PC-3 (cell line): ENCODE measurements at regions of chr6 and their contacts with region 1.

Region 1: DNA sequence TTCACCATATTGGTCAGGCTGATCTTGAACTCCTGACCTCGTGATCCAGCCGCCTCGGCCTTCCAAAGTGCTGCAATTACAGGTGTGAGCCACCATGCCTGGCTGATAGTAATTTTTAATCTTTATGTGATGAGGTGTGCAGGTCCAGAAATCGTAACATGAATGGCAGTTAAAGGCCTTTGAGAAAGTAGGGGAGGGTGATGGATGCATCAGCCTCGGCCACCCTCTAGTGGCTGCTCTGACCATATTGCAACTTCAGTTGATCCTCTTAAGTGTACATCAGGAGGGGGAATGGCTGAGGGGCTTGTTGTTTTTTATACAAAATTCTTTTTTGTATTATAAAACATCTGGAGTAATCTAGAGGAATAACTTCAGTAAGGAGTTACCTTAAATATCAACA is 193.0 kb downstream of the ZFAND3 start:
- DNase-seq: peak; percentile 67
- ATAC-seq: peak; percentile 90
- H3K4me3 ChIP-seq: no peak overlapping the region
- H3K27ac ChIP-seq: no peak overlapping the region
- H3K4me1 ChIP-seq: no peaks in the 10 kb centered on the region
- H3K27me3 ChIP-seq: no peaks in the 10 kb centered on the region
- CTCF ChIP-seq: peak; percentile 91

Region 2: GRCh38 chr6:37698261-37699137 is 314.1 kb before region 1 on chr6:
- CTCF ChIA-PET with region 1: no interaction called
- POLR2A ChIA-PET with region 1: no interaction called
- intact Hi-C with region 1: loop called (anchors 5 kb)
- DNase-seq: peak; percentile 58
- ATAC-seq: peak; percentile 36
- H3K4me3 ChIP-seq: peak overlapping the region; percentile 85
- H3K27ac ChIP-seq: no peak overlapping the region
- H3K4me1 ChIP-seq: peaks cover 3% of the 10 kb centered on the region; the same call in 1 of the 2 replicates
- H3K27me3 ChIP-seq: peaks cover 17% of the 10 kb centered on the region
- CTCF ChIP-seq: 0 out of 2 replicates have a peak, but pooled peaks have one; percentile 20

Region 3: GRCh38 chr6:37791156-37791919 is 221.2 kb before region 1 on chr6:
- CTCF ChIA-PET with region 1: interaction called, 3 read pairs
- POLR2A ChIA-PET with region 1: no interaction called
- intact Hi-C with region 1: loop called (anchors 1 kb)
- DNase-seq: peak; percentile 98
- ATAC-seq: peak; percentile 97
- H3K4me3 ChIP-seq: no peak overlapping the region
- H3K27ac ChIP-seq: no peak overlapping the region
- H3K4me1 ChIP-seq: peaks cover 23% of the 10 kb centered on the region
- H3K27me3 ChIP-seq: no peaks in the 10 kb centered on the region
- CTCF ChIP-seq: peak; percentile 94

Region 4: DNA sequence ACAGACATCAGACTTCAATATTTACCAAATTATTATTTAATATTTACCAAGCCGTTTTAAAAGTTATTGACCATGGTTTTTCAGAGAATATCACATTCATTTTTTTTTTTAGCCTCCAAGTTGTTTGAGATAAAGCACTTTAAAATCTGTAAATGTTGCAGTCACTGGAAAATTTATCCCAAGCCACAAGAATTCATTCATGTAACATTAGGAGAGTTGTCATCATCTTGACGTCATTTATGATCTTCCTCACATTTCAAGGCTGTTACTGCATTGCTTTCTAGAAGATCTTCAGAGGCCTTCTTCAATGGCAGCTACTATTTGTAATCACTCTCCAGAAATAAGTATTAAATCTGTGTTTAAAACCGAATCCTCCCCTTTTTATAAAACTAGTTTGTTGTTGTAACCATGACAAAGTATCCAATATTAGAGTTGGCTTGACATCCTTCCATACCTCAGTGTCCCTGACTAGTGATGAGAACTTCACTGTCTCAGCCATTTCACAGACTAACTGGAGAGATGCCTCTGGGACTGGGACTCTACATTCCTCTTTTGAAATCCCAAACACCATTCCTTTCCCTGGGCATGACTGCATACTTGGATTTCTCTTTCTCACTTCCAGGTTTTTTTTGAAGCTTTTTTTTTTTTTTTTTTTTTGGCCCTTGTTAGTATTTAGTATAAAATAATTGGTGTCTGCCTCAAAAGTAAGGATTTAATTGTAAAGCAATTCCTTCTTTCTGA is 93.0 kb before region 1 on chr6:
- CTCF ChIA-PET with region 1: interaction called, 6 read pairs
- POLR2A ChIA-PET with region 1: no interaction called
- intact Hi-C with region 1: loop called (anchors 2 kb)
- DNase-seq: no peak
- ATAC-seq: no peak
- H3K4me3 ChIP-seq: no peak overlapping the region
- H3K27ac ChIP-seq: no peak overlapping the region
- H3K4me1 ChIP-seq: peaks cover 21% of the 10 kb centered on the region
- H3K27me3 ChIP-seq: no peaks in the 10 kb centered on the region
- CTCF ChIP-seq: no peak

Region 5: GRCh38 chr6:37940074-37940847 is 72.3 kb before region 1 on chr6:
- CTCF ChIA-PET with region 1: no interaction called
- POLR2A ChIA-PET with region 1: no interaction called
- intact Hi-C with region 1: loop called (anchors 5 kb)
- DNase-seq: no peak
- ATAC-seq: peak; percentile 69
- H3K4me3 ChIP-seq: no peak overlapping the region
- H3K27ac ChIP-seq: no peak overlapping the region
- H3K4me1 ChIP-seq: no peaks in the 10 kb centered on the region
- H3K27me3 ChIP-seq: no peaks in the 10 kb centered on the region
- CTCF ChIP-seq: no peak

Region 6: GRCh38 chr6:37990762-37991525 is 21.6 kb before region 1 on chr6:
- CTCF ChIA-PET with region 1: no interaction called
- POLR2A ChIA-PET with region 1: no interaction called
- intact Hi-C with region 1: no loop called
- DNase-seq: peak; percentile 26
- ATAC-seq: no peak
- H3K4me3 ChIP-seq: no peak overlapping the region
- H3K27ac ChIP-seq: no peak overlapping the region
- H3K4me1 ChIP-seq: peaks cover 19% of the 10 kb centered on the region
- H3K27me3 ChIP-seq: no peaks in the 10 kb centered on the region
- CTCF ChIP-seq: no peak